ENCODE measurements at regions of chr12 and their contacts with region 1.

Region 1: DNA sequence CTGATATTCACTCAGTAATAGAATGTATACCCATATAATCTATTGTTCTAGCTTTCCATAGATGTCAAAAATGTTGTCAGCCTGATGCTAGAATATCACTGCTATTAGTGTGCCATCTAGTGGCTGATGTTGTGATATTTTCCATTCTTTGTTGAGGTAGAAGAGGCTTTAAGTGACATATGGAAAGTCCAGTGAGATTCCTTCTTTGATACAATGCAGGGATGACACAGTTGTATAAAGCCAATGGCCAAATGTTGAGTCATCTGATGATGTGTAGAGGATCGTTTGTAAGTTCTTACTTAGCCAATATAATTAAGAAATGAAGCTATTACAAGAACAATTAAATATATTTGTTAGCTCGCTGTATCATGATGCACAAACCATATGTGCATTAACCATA is 58.1 kb upstream of the PCED1B start:
- DNase-seq: peak; percentile 97
- ATAC-seq: peak; percentile 62
- H3K4me3 ChIP-seq: no peak overlapping the region
- H3K27ac ChIP-seq: no peak overlapping the region
- H3K4me1 ChIP-seq: peaks cover 45% of the 10 kb centered on the region
- H3K27me3 ChIP-seq: no peaks in the 10 kb centered on the region
- CTCF ChIP-seq: peak; percentile 85

Region 2: DNA sequence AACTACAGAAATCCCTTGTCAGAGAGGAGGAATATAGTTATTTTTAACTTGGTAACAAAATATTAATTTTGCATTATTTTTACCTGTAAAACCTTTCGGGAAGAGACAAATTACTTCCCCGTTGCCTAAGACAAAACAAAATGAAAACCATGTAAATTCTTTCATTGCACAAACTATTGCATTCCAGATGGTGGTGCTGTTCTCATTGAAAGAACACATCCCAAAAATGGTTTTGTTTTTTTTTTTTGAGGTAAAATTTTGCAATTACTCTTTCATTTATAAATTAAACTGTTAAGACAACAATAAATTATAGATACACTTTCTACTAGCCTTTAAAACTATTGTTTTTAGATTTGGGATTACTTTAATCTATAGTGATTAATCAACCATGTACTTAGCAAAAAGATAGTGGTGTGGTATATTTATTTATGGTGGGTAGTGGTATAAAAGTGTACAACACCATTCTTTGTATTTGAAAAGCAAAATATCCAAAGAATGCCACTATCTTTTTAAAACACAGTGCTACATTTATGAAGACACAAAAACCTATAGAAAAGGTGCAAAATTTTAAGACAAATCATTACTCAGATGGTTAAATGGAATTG is 867.9 kb before region 1 on chr12:
- CTCF ChIA-PET with region 1: no interaction called
- POLR2A ChIA-PET with region 1: no interaction called
- intact Hi-C with region 1: loop called (anchors 1 kb)
- DNase-seq: peak; percentile 56
- ATAC-seq: no peak
- H3K4me3 ChIP-seq: no peak overlapping the region; the same call in 1 of the 2 replicates
- H3K27ac ChIP-seq: no peak overlapping the region
- H3K4me1 ChIP-seq: peaks cover 29% of the 10 kb centered on the region
- H3K27me3 ChIP-seq: no peaks in the 10 kb centered on the region
- CTCF ChIP-seq: peak; percentile 90

Region 3: GRCh38 chr12:46556105-46556559 is 465.2 kb before region 1 on chr12:
- CTCF ChIA-PET with region 1: no interaction called
- POLR2A ChIA-PET with region 1: interaction called, 5 read pairs
- intact Hi-C with region 1: loop called (anchors 5 kb)
- DNase-seq: peak; percentile 93
- ATAC-seq: peak; percentile 76
- H3K4me3 ChIP-seq: peak overlapping the region; percentile 41
- H3K27ac ChIP-seq: peak overlapping the region; percentile 96
- H3K4me1 ChIP-seq: peaks cover 87% of the 10 kb centered on the region
- H3K27me3 ChIP-seq: no peaks in the 10 kb centered on the region
- CTCF ChIP-seq: no peak

Region 4: GRCh38 chr12:46944088-46944487 is 77.2 kb before region 1 on chr12:
- CTCF ChIA-PET with region 1: interaction called, 8 read pairs
- POLR2A ChIA-PET with region 1: no interaction called
- intact Hi-C with region 1: loop called (anchors 1 kb)
- DNase-seq: peak; percentile 64
- ATAC-seq: no peak
- H3K4me3 ChIP-seq: no peak overlapping the region
- H3K27ac ChIP-seq: no peak overlapping the region
- H3K4me1 ChIP-seq: peaks cover 50% of the 10 kb centered on the region
- H3K27me3 ChIP-seq: no peaks in the 10 kb centered on the region
- CTCF ChIP-seq: peak; percentile 47

Region 5: DNA sequence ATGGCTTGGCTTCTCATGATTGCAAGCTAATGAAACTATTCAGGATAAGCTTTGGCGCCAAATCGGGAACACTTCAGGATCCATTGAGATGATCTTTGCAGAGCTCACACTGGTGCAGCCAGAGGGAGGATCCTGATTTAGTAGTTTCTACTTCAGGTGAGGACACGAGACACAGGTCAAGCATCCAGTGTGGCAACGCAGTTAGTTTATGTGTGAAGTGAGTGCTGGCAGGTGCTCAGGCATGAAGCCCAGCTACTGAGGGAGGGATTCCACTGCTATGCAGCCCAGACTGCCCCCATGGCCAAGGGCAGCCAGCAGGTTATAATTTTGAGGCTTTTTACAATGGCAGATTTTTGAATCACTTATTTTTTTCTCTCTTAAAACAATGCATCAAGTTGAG is 55.4 kb before region 1 on chr12:
- CTCF ChIA-PET with region 1: no interaction called
- POLR2A ChIA-PET with region 1: no interaction called
- intact Hi-C with region 1: no loop called
- DNase-seq: no peak
- ATAC-seq: no peak
- H3K4me3 ChIP-seq: no peak overlapping the region
- H3K27ac ChIP-seq: no peak overlapping the region
- H3K4me1 ChIP-seq: peaks cover 14% of the 10 kb centered on the region
- H3K27me3 ChIP-seq: no peaks in the 10 kb centered on the region
- CTCF ChIP-seq: no peak

Region 6: GRCh38 chr12:46998811-46999368 is 22.4 kb before region 1 on chr12:
- CTCF ChIA-PET with region 1: no interaction called
- POLR2A ChIA-PET with region 1: no interaction called
- intact Hi-C with region 1: loop called (anchors 1 kb)
- DNase-seq: peak; percentile 86
- ATAC-seq: peak; percentile 100
- H3K4me3 ChIP-seq: no peak overlapping the region
- H3K27ac ChIP-seq: peak overlapping the region; percentile 51
- H3K4me1 ChIP-seq: peaks cover 20% of the 10 kb centered on the region
- H3K27me3 ChIP-seq: no peaks in the 10 kb centered on the region
- CTCF ChIP-seq: no peak

Measured in PC-3 (cell line).